IMR-90 (cell line): ENCODE measurements at regions of chr2 and their contacts with region 1.

Region 1: GRCh38 chr2:191691016-191691735 is 13.2 kb downstream of the NABP1 start:
- DNase-seq: peak; percentile 87
- ATAC-seq: peak; percentile 30
- H3K4me3 ChIP-seq: no peak overlapping the region
- H3K27ac ChIP-seq: no peak overlapping the region
- H3K4me1 ChIP-seq: peaks cover 16% of the 10 kb centered on the region
- H3K27me3 ChIP-seq: no peaks in the 10 kb centered on the region
- CTCF ChIP-seq: peak; percentile 80
- POLR2A ChIP-seq: no peak
- RAD21 ChIP-seq: peak; percentile 79

Region 2: DNA sequence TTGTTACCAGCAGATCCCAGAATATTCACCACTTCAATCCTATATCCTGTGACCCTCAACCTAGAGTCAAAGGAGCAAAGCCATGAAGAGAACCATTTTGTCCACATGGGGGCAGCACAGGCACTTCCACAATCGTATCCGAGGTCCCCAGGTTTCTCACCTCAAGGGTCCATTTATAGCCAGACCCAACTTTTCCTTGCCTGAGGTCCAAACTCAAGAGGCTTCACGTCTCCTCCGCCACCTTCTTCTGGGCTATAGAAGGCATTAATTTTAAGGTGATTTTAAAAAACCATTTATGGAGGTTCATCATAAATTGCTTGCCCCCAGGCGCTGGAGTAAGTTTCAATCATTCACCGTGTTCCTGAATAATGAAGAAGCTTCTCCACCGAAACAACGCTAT is 124.8 kb before region 1 on chr2:
- CTCF ChIA-PET with region 1: interaction called, 10 read pairs
- POLR2A ChIA-PET with region 1: interaction called, 6 read pairs
- dilution Hi-C with region 1: no loop called
- in situ Hi-C with region 1: loop called (anchors 5 kb)
- intact Hi-C with region 1: loop called (anchors 1 kb)
- DNase-seq: peak; percentile 59
- ATAC-seq: peak; percentile 77
- H3K4me3 ChIP-seq: no peak overlapping the region
- H3K27ac ChIP-seq: no peak overlapping the region
- H3K4me1 ChIP-seq: no peaks in the 10 kb centered on the region
- H3K27me3 ChIP-seq: peaks cover 2% of the 10 kb centered on the region
- CTCF ChIP-seq: peak; percentile 76
- POLR2A ChIP-seq: no peak
- RAD21 ChIP-seq: peak; percentile 84

Region 3: DNA sequence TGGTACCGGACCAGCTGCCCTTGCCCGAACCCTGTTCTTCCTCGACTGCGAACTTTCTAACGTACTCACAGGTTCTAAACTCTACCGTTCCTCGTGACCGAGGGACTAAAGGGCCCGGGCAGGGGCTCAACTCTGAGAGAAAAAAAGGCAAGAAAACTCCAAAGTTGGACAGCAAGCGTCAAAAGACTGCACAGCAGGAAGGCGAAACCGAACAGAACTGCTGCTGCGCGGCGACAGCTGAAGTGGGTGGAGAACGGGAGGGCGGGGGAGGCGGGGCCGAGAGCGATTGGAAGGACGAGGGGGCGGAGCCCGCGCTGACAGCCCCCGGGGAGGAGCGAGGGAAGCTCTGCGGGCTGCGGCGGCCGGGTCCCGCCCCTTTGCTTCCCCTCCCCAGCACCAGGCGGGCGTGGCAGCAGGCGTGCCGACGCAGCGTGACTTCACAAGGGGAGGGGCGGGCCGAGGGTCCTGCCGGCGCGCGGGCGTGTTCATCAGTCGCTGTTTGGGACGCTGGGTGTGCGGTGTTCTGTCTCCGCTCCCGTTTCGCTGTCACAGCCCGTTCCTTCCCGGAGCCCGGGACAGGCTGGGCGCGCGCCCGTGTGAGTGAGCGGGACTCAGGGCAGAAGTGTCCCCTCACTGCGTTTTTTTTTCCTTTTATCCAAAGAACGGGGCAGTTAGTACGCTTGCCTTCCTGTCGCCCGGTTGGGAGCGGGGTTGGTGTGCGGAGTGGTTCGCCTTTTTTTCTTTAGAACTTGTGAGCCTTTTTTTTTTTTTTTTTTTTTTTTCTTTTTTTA is 13.3 kb before region 1 on chr2 and contains the start of gene NABP1:
- CTCF ChIA-PET with region 1: interaction called, 3 read pairs
- POLR2A ChIA-PET with region 1: interaction called, 16 read pairs
- dilution Hi-C with region 1: no loop called
- in situ Hi-C with region 1: no loop called
- intact Hi-C with region 1: no loop called
- DNase-seq: peak; percentile 97
- ATAC-seq: peak; percentile 95
- H3K4me3 ChIP-seq: peak within 1 kb of the TSS; percentile 73
- H3K27ac ChIP-seq: peak within 1 kb of the TSS; percentile 89
- H3K4me1 ChIP-seq: peaks cover 5% of the 10 kb centered on the region; the same call in 1 of the 2 replicates
- H3K27me3 ChIP-seq: no peaks in the 10 kb centered on the region
- CTCF ChIP-seq: no peak
- POLR2A ChIP-seq: peak; percentile 100
- RAD21 ChIP-seq: peak; percentile 26
- total RNA-seq, gene NABP1: 57.7 and 141 TPM in 2 replicates

Region 4: DNA sequence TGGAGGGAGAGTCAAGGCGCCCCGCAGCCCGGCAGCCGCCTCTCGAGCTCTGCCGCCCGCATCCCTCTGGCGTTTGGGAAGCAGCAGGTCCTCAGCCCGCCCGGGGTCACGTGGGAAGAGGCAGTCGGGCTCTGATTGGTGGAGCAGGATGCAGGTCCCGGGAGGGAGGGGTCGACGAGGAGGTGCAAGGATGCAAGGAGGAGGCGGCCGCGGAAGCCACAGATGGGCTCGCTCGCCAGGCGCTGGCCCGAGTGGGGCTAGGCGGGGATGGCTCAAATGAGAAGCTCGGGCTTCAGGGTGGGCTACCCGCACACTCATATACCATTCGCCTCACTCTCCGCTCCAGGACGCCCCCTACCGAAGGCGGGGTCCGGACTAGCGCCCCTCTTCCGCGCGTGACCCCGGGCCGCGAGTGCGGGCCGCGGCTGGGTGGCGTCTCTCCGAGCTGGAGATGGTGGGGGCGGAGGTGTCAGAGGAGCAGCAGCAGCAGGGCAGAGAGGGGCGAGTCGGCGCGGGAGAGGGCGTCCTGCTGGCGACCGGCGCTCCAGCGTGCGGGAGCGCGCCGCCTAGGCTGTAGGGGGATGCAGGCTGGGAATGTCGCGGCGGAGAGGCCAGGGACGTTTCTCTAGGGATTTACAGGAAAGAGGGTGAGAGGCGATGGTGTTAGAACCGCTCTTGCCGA is 503.8 kb after region 1 on chr2 and contains the start of gene TMEFF2:
- CTCF ChIA-PET with region 1: no interaction called
- POLR2A ChIA-PET with region 1: interaction called, 10 read pairs
- dilution Hi-C with region 1: no loop called
- in situ Hi-C with region 1: no loop called
- intact Hi-C with region 1: no loop called
- DNase-seq: peak; percentile 83
- ATAC-seq: peak; percentile 86
- H3K4me3 ChIP-seq: peak within 1 kb of the TSS; percentile 61
- H3K27ac ChIP-seq: no peak within 1 kb of the TSS
- H3K4me1 ChIP-seq: no peaks in the 10 kb centered on the region
- H3K27me3 ChIP-seq: peaks cover 55% of the 10 kb centered on the region
- CTCF ChIP-seq: peak; percentile 10; the same call in 1 of the 2 replicates
- POLR2A ChIP-seq: peak; percentile 23; the same call in 1 of the 2 replicates
- RAD21 ChIP-seq: no peak
- total RNA-seq, gene TMEFF2: 1.3 and 1.4 TPM in 2 replicates